Right lobe of liver (tissue), 6 donors: ENCODE measurements at regions of chr4 and their contacts with region 1.

Region 1: GRCh38 chr4:6720202-6720699 is 4.3 kb downstream of the BLOC1S4 start:
- DNase-seq: peak; percentile 85 to 89 (median 88)
- ATAC-seq: peak; percentile 70 to 78 (median 75)
- H3K4me3 ChIP-seq: no peak overlapping the region
- H3K27ac ChIP-seq: no peak overlapping the region
- H3K4me1 ChIP-seq: peaks cover 0 to 15% (median 5%) of the 10 kb centered on the region in 4 donors
- H3K27me3 ChIP-seq: no peaks in the 10 kb centered on the region
- CTCF ChIP-seq: peak; percentile 87 to 98 (median 96)
- POLR2A ChIP-seq: no peak

Region 2: GRCh38 chr4:6873792-6874461 is 153.7 kb after region 1 on chr4:
- intact Hi-C with region 1: loop called (anchors 5 kb)
- DNase-seq: peak; percentile 72 to 78 (median 77)
- ATAC-seq: peak; percentile 82 to 86 (median 85)
- H3K4me3 ChIP-seq: no peak overlapping the region
- H3K27ac ChIP-seq: no peak overlapping the region
- H3K4me1 ChIP-seq: no peaks in the 10 kb centered on the region
- H3K27me3 ChIP-seq: no peaks in the 10 kb centered on the region
- CTCF ChIP-seq: peak; percentile 75 to 90 (median 84)
- POLR2A ChIP-seq: no peak

Region 3: GRCh38 chr4:7070729-7071511 is 350.7 kb after region 1 on chr4:
- intact Hi-C with region 1: loop called in 1 of 2 experiments (anchors 10 kb)
- DNase-seq: peak; percentile 81 to 85 (median 85)
- ATAC-seq: peak; percentile 47 to 55 (median 52)
- H3K4me3 ChIP-seq: no peak overlapping the region
- H3K27ac ChIP-seq: no peak overlapping the region
- H3K4me1 ChIP-seq: peaks cover 0 to 20% (median 7%) of the 10 kb centered on the region in 4 donors
- H3K27me3 ChIP-seq: no peaks in the 10 kb centered on the region
- CTCF ChIP-seq: peak; percentile 98 to 99 (median 98)
- POLR2A ChIP-seq: no peak

Region 4: GRCh38 chr4:7206911-7207567 is 486.8 kb after region 1 on chr4:
- intact Hi-C with region 1: no loop called
- DNase-seq: peak; percentile 68 to 90 (median 76)
- ATAC-seq: peak; percentile 79 to 84 (median 82)
- H3K4me3 ChIP-seq: no peak overlapping the region
- H3K27ac ChIP-seq: peak overlapping the region in 1 of 3 donors; percentile 31
- H3K4me1 ChIP-seq: peaks cover 0 to 41% (median 9%) of the 10 kb centered on the region in 4 donors
- H3K27me3 ChIP-seq: no peaks in the 10 kb centered on the region
- CTCF ChIP-seq: no peak
- POLR2A ChIP-seq: no peak